Activated CD4-positive, alpha-beta T cell treated with anti-CD3 and anti-CD28 coated beads for 36 hours (primary cell): ENCODE measurements at regions of chr7 and their contacts with region 1.

Region 1: GRCh38 chr7:23696916-23697441 is 13.0 kb upstream of the STK31 start:
- DNase-seq: peak; percentile 74
- ATAC-seq: no peak
- H3K4me3 Mint-ChIP-seq: no peak overlapping the region
- H3K27ac Mint-ChIP-seq: no peak overlapping the region
- H3K4me1 Mint-ChIP-seq: peaks cover 2% of the 10 kb centered on the region
- H3K27me3 Mint-ChIP-seq: no peaks in the 10 kb centered on the region

Region 2: DNA sequence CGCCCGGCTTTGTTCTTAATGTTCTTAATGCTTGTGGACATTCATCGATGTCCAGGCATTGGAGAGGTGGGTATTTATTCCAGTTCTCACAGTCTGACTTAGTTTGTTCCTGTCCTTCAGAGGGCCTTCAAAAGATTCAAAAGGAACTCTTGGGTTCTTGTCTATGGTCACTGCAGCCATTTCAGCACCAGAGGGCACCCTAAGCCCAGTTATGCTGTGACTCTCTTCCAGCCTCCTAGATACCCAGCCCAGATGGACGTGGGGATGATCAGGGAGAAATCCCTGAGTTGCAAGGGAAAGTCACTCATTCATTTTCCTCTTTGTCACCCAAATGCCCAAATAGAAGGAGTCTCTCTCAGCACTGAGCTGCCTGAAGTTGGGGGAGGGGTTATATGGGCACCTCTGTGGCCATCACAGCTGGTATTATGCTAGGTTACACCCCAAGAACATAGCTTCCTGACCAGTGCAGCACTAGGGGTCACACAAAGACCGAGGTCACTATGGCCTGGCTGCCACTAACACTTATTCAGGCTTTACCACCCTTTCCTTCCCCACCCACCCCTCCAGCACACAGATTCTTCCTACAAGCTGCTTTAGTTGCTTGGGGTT is 126.3 kb before region 1 on chr7:
- CTCF ChIA-PET with region 1: interaction called, 39 read pairs
- POLR2A ChIA-PET with region 1: interaction called, 3 read pairs
- intact Hi-C with region 1: loop called in 1 of 2 experiments (anchors 5 kb)
- DNase-seq: peak; percentile 83
- ATAC-seq: peak; percentile 92
- H3K4me3 Mint-ChIP-seq: no peak overlapping the region
- H3K27ac Mint-ChIP-seq: no peak overlapping the region
- H3K4me1 Mint-ChIP-seq: no peaks in the 10 kb centered on the region
- H3K27me3 Mint-ChIP-seq: peaks cover 4% of the 10 kb centered on the region

Region 3: GRCh38 chr7:23685731-23686130 is 11.2 kb before region 1 on chr7:
- CTCF ChIA-PET with region 1: interaction called, 18 read pairs
- POLR2A ChIA-PET with region 1: no interaction called
- intact Hi-C with region 1: no loop called
- DNase-seq: no peak
- ATAC-seq: no peak
- H3K4me3 Mint-ChIP-seq: no peak overlapping the region
- H3K27ac Mint-ChIP-seq: no peak overlapping the region
- H3K4me1 Mint-ChIP-seq: peaks cover 2% of the 10 kb centered on the region
- H3K27me3 Mint-ChIP-seq: no peaks in the 10 kb centered on the region